CD8-positive, alpha-beta T cell (primary cell): ENCODE measurements at regions of chr12 and their contacts with region 1.

Region 1: GRCh38 chr12:48851883-48852733 is at the start of gene DDX23:
- DNase-seq: peak; percentile 79 to 97 (median 90)
- ATAC-seq: peak; percentile 90
- H3K4me3 ChIP-seq: peak within 1 kb of the TSS; percentile 67 to 91
- H3K4me3 Mint-ChIP-seq: peak within 1 kb of the TSS; percentile 99
- H3K27ac ChIP-seq: peak within 1 kb of the TSS; percentile 92 to 96
- H3K27ac Mint-ChIP-seq: peak within 1 kb of the TSS; percentile 99
- H3K4me1 ChIP-seq: peaks cover 28% of the 10 kb centered on the region
- H3K4me1 Mint-ChIP-seq: peaks cover 42% of the 10 kb centered on the region
- H3K27me3 ChIP-seq: no peaks in the 10 kb centered on the region
- H3K27me3 Mint-ChIP-seq: no peaks in the 10 kb centered on the region
- CTCF ChIP-seq: no peak
- total RNA-seq, gene DDX23: 70.6 to 76.4 TPM

Region 2: GRCh38 chr12:48276621-48277020 is 575.5 kb before region 1 on chr12:
- CTCF ChIA-PET with region 1: no interaction called
- POLR2A ChIA-PET with region 1: no interaction called
- intact Hi-C with region 1: no loop called
- DNase-seq: no peak
- ATAC-seq: no peak
- H3K4me3 ChIP-seq: no peak overlapping the region
- H3K4me3 Mint-ChIP-seq: no peak overlapping the region
- H3K27ac ChIP-seq: no peak overlapping the region
- H3K27ac Mint-ChIP-seq: no peak overlapping the region
- H3K4me1 ChIP-seq: no peaks in the 10 kb centered on the region
- H3K4me1 Mint-ChIP-seq: no peaks in the 10 kb centered on the region
- H3K27me3 ChIP-seq: no peaks in the 10 kb centered on the region
- H3K27me3 Mint-ChIP-seq: peaks cover 26% of the 10 kb centered on the region
- CTCF ChIP-seq: no peak

Region 3: GRCh38 chr12:48716493-48717251 is 135.4 kb before region 1 on chr12 and contains the start of gene CCNT1:
- CTCF ChIA-PET with region 1: interaction called, 3 read pairs
- POLR2A ChIA-PET with region 1: no interaction called
- intact Hi-C with region 1: loop called in 1 of 2 experiments (anchors 1 kb)
- DNase-seq: peak; percentile 96 to 100 (median 97)
- ATAC-seq: peak; percentile 86
- H3K4me3 ChIP-seq: peak within 1 kb of the TSS; percentile 84
- H3K4me3 Mint-ChIP-seq: peak within 1 kb of the TSS; percentile 92
- H3K27ac ChIP-seq: peak within 1 kb of the TSS; percentile 96 to 99
- H3K27ac Mint-ChIP-seq: peak within 1 kb of the TSS; percentile 98
- H3K4me1 ChIP-seq: peaks cover 30% of the 10 kb centered on the region
- H3K4me1 Mint-ChIP-seq: peaks cover 40% of the 10 kb centered on the region
- H3K27me3 ChIP-seq: no peaks in the 10 kb centered on the region
- H3K27me3 Mint-ChIP-seq: no peaks in the 10 kb centered on the region
- CTCF ChIP-seq: no peak
- total RNA-seq, gene CCNT1: 127 to 132 TPM

Region 4: GRCh38 chr12:48882315-48882687 is 30.2 kb after region 1 on chr12:
- CTCF ChIA-PET with region 1: interaction called, 270 read pairs
- POLR2A ChIA-PET with region 1: no interaction called
- intact Hi-C with region 1: no loop called
- DNase-seq: no peak
- ATAC-seq: no peak
- H3K4me3 ChIP-seq: no peak overlapping the region
- H3K4me3 Mint-ChIP-seq: no peak overlapping the region
- H3K27ac ChIP-seq: no peak overlapping the region
- H3K27ac Mint-ChIP-seq: no peak overlapping the region
- H3K4me1 ChIP-seq: no peaks in the 10 kb centered on the region
- H3K4me1 Mint-ChIP-seq: no peaks in the 10 kb centered on the region
- H3K27me3 ChIP-seq: peaks cover 0 to 5% of the 10 kb centered on the region in 2 experiments
- H3K27me3 Mint-ChIP-seq: peaks cover 28% of the 10 kb centered on the region
- CTCF ChIP-seq: no peak

Region 5: DNA sequence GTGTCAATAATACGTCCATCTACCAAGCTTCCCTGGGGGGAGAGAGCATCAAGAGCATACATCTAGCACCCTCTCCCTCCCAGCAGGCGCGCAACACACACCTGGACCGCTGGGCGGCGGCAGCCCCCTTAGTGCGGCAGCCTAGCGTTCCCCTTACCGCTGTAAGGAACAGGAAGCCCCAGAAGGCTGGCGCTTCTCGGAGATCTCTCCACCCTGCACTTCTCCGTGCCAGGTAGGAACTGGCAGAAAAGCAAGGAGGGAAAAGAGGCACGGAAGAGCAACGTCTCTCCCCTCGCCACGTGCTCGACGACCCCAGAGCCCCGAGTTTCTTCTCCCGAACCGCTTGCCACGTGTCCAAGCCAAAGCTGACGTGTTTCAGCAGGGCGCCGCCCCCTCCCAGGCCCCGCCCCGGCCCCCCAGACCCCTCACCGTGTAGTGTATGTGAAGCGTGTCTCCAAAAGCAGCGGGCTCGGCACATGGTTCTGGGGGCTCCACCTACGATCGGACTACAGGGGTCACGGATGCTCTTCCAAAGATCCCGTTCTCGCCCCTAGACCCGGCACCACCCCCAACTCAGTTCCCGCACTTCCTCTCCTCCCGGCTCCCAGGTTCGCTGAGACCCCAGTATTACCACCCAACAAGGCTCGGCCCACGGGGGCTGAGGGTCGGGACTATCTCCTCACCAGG is 72.7 kb after region 1 on chr12:
- CTCF ChIA-PET with region 1: interaction called, 71 read pairs
- POLR2A ChIA-PET with region 1: interaction called, 24 read pairs
- intact Hi-C with region 1: loop called (anchors 2 kb)
- DNase-seq: peak; percentile 65 to 90 (median 83)
- ATAC-seq: peak; percentile 69
- H3K4me3 ChIP-seq: peak overlapping the region; percentile 96 to 99
- H3K4me3 Mint-ChIP-seq: peak overlapping the region; percentile 97
- H3K27ac ChIP-seq: peak overlapping the region; percentile 94
- H3K27ac Mint-ChIP-seq: peak overlapping the region; percentile 97
- H3K4me1 ChIP-seq: peaks cover 24% of the 10 kb centered on the region
- H3K4me1 Mint-ChIP-seq: peaks cover 46% of the 10 kb centered on the region
- H3K27me3 ChIP-seq: no peaks in the 10 kb centered on the region
- H3K27me3 Mint-ChIP-seq: no peaks in the 10 kb centered on the region
- CTCF ChIP-seq: peak; percentile 78

Region 6: GRCh38 chr12:48977315-48978281 is 125.5 kb after region 1 on chr12:
- CTCF ChIA-PET with region 1: interaction called, 29 read pairs
- POLR2A ChIA-PET with region 1: interaction called, 21 read pairs
- intact Hi-C with region 1: loop called (anchors 1 to 2 kb)
- DNase-seq: peak; percentile 59 to 92 (median 84)
- ATAC-seq: peak; percentile 55
- H3K4me3 ChIP-seq: peak overlapping the region; percentile 60 to 77
- H3K4me3 Mint-ChIP-seq: peak overlapping the region; percentile 63
- H3K27ac ChIP-seq: no peak overlapping the region
- H3K27ac Mint-ChIP-seq: peak overlapping the region; percentile 76
- H3K4me1 ChIP-seq: peaks cover 44% of the 10 kb centered on the region
- H3K4me1 Mint-ChIP-seq: peaks cover 46% of the 10 kb centered on the region
- H3K27me3 ChIP-seq: peaks cover 14% of the 10 kb centered on the region in 2 experiments
- H3K27me3 Mint-ChIP-seq: peaks cover 28% of the 10 kb centered on the region
- CTCF ChIP-seq: peak; percentile 92

Region 7: DNA sequence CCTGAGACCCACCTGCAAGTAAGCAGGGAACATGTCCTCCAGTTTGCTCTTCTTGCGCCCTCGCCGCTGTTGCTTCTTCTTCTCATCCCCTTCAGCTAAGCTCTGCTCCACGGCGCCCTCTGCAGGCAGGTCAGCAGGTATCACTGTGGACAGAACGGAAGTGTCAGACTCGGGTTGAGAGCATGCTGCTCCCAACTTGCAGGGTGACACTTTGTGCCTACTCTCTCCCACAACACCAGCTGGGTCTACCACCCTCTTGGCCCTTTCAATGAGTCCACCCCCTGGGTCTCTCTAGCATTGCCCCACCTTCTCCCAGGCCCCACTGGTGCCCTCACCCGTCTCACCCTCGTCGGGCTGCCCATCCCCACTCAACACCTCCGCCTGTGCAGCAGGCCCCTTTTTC is 191.7 kb after region 1 on chr12:
- CTCF ChIA-PET with region 1: interaction called, 4 read pairs
- POLR2A ChIA-PET with region 1: no interaction called
- intact Hi-C with region 1: loop called in 1 of 2 experiments (anchors 10 kb)
- DNase-seq: peak; percentile 67 to 90 (median 84)
- ATAC-seq: peak; percentile 87
- H3K4me3 ChIP-seq: no peak overlapping the region
- H3K4me3 Mint-ChIP-seq: no peak overlapping the region
- H3K27ac ChIP-seq: peak overlapping the region; percentile 29 to 55
- H3K27ac Mint-ChIP-seq: peak overlapping the region; percentile 24
- H3K4me1 ChIP-seq: no peaks in the 10 kb centered on the region
- H3K4me1 Mint-ChIP-seq: peaks cover 10% of the 10 kb centered on the region
- H3K27me3 ChIP-seq: no peaks in the 10 kb centered on the region
- H3K27me3 Mint-ChIP-seq: no peaks in the 10 kb centered on the region
- CTCF ChIP-seq: peak; percentile 77

Region 8: GRCh38 chr12:49322708-49323523 is 470.8 kb after region 1 on chr12 and contains the start of gene TROAP:
- CTCF ChIA-PET with region 1: no interaction called
- POLR2A ChIA-PET with region 1: no interaction called
- intact Hi-C with region 1: loop called in 1 of 2 experiments (anchors 2 kb)
- DNase-seq: peak; percentile 93 to 99 (median 96)
- ATAC-seq: peak; percentile 96
- H3K4me3 ChIP-seq: peak within 1 kb of the TSS; percentile 71 to 83
- H3K4me3 Mint-ChIP-seq: peak within 1 kb of the TSS; percentile 89
- H3K27ac ChIP-seq: peak within 1 kb of the TSS; percentile 48 to 60
- H3K27ac Mint-ChIP-seq: peak within 1 kb of the TSS; percentile 81
- H3K4me1 ChIP-seq: peaks cover 12% of the 10 kb centered on the region
- H3K4me1 Mint-ChIP-seq: peaks cover 20% of the 10 kb centered on the region
- H3K27me3 ChIP-seq: no peaks in the 10 kb centered on the region
- H3K27me3 Mint-ChIP-seq: no peaks in the 10 kb centered on the region
- CTCF ChIP-seq: no peak
- total RNA-seq, gene TROAP: 0.49 to 0.72 TPM